ENCODE measurements at regions of chr15 and their contacts with region 1.

Region 1: DNA sequence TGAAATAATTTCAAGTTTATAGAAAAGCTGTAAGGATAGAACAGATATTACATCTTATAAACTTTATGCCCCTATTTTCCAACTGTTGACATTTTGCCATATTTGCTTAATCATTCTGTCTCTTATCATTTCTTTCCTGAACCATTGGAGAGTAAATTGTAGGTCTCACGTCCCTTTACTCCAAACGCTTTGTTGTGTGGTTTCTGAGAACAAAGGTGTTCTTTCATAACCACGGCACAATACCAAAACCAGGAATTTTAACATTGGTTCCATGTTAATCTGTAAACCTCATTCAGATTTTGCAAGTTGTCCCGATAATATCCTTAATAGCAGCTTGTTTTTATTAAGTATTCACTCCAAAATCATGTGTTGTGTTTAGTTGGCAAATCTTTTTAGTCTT is 134.8 kb downstream of the AKAP13 start:
- DNase-seq: no peak
- ATAC-seq: no peak
- H3K4me3 ChIP-seq: no peak overlapping the region
- H3K4me3 Mint-ChIP-seq: no peak overlapping the region
- H3K27ac ChIP-seq: no peak overlapping the region
- H3K27ac Mint-ChIP-seq: no peak overlapping the region
- H3K4me1 ChIP-seq: no peaks in the 10 kb centered on the region
- H3K4me1 Mint-ChIP-seq: peaks cover 62 to 72% (median 70%) of the 10 kb centered on the region in 3 donors
- H3K27me3 ChIP-seq: no peaks in the 10 kb centered on the region
- H3K27me3 Mint-ChIP-seq: no peaks in the 10 kb centered on the region

Region 2: GRCh38 chr15:85495096-85495495 is 20.1 kb before region 1 on chr15:
- CTCF ChIA-PET with region 1: no interaction called
- POLR2A ChIA-PET with region 1: no interaction called
- DNase-seq: no peak
- ATAC-seq: no peak
- H3K4me3 ChIP-seq: no peak overlapping the region
- H3K4me3 Mint-ChIP-seq: no peak overlapping the region
- H3K27ac ChIP-seq: no peak overlapping the region
- H3K27ac Mint-ChIP-seq: no peak overlapping the region
- H3K4me1 ChIP-seq: peaks cover 15 to 17% of the 10 kb centered on the region in 2 experiments
- H3K4me1 Mint-ChIP-seq: peaks cover 80 to 90% (median 87%) of the 10 kb centered on the region in 3 donors
- H3K27me3 ChIP-seq: no peaks in the 10 kb centered on the region
- H3K27me3 Mint-ChIP-seq: no peaks in the 10 kb centered on the region

Region 3: DNA sequence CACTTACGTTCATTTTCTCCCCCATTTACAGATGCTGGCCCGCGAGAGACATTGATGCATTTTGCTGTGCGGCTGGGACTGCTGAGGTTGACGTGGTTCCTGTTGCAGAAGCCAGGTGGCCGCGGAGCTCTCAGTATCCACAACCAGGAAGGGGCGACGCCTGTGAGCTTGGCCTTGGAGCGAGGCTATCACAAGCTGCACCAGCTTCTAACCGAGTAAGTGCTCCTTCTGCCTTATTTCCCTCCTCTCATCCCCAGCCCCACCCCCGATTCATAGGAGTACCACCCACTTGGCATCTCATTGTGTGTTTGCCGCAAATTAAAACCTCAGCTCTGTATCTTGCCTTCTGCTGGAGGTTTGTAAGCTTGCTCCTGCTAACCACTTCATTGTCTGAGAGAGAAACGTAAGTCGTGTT is 28.5 kb after region 1 on chr15:
- CTCF ChIA-PET with region 1: no interaction called
- POLR2A ChIA-PET with region 1: no interaction called
- DNase-seq: peak; percentile 2 to 73 (median 53)
- ATAC-seq: peak; percentile 72 to 93 (median 76)
- H3K4me3 ChIP-seq: peak overlapping the region; percentile 0 to 39
- H3K4me3 Mint-ChIP-seq: peak overlapping the region; percentile 2 to 69 (median 43)
- H3K27ac ChIP-seq: no peak overlapping the region
- H3K27ac Mint-ChIP-seq: peak overlapping the region; percentile 6 to 53
- H3K4me1 ChIP-seq: peaks cover 5 to 20% of the 10 kb centered on the region in 2 experiments
- H3K4me1 Mint-ChIP-seq: peaks cover 71 to 85% (median 81%) of the 10 kb centered on the region in 3 donors
- H3K27me3 ChIP-seq: no peaks in the 10 kb centered on the region
- H3K27me3 Mint-ChIP-seq: no peaks in the 10 kb centered on the region

Region 4: DNA sequence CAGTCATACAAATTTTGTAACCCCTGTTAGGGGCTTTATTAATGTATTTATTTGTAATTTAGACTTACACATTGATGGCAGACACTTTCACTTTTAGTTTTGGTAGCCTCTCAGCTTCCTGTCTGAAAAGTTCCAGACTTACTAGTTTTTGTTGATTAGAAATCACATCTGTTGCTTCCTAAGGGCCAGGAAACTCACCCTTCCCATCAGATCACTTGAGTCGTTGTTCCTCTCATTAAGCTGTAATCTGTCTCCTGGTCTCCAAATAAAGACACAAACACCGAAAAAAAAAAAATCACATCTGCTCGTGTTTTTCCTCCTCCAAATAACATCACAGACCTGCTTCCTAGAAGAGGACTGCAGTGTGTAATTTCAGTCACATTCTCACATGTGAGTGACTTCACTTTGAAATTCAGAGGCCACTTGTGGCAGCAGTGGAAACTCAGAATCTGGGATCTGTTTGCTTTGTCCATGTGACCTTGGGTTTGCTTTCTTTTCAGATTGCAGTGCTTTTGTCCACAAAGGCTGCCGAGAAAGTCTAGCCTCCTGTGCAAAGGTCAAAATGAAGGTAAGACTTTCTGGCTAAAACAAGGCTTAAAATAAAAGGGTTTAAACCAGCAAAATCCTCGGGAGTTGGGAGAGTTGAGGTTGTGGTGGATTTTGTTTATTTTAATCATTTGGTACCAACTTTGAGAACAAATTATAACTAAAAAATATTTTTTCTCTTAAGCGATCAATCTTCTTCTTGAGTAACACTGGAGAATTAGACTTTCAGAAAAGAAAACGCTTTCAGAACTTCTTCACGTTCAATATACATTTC is 192.5 kb after region 1 on chr15:
- CTCF ChIA-PET with region 1: no interaction called
- POLR2A ChIA-PET with region 1: no interaction called
- DNase-seq: peak in 1 of 35 experiments; percentile 73
- ATAC-seq: peak; percentile 38 to 65 (median 42)
- H3K4me3 ChIP-seq: peak overlapping the region; percentile 34 to 46
- H3K4me3 Mint-ChIP-seq: peak overlapping the region; percentile 73 to 84 (median 82)
- H3K27ac ChIP-seq: peak overlapping the region; percentile 91
- H3K27ac Mint-ChIP-seq: peak overlapping the region; percentile 95 to 98
- H3K4me1 ChIP-seq: peaks cover 43 to 65% of the 10 kb centered on the region in 2 experiments
- H3K4me1 Mint-ChIP-seq: peaks cover 74 to 88% (median 87%) of the 10 kb centered on the region in 3 donors
- H3K27me3 ChIP-seq: no peaks in the 10 kb centered on the region
- H3K27me3 Mint-ChIP-seq: no peaks in the 10 kb centered on the region

Region 5: GRCh38 chr15:85750319-85750806 is 235.2 kb after region 1 on chr15:
- CTCF ChIA-PET with region 1: interaction called in 1 of 2 experiments, 10 read pairs
- POLR2A ChIA-PET with region 1: no interaction called
- DNase-seq: no peak
- ATAC-seq: peak in 2 of 4 experiments; percentile 7 to 25
- H3K4me3 ChIP-seq: no peak overlapping the region
- H3K4me3 Mint-ChIP-seq: no peak overlapping the region
- H3K27ac ChIP-seq: no peak overlapping the region
- H3K27ac Mint-ChIP-seq: peak overlapping the region; percentile 52 to 70
- H3K4me1 ChIP-seq: peaks cover 3 to 22% of the 10 kb centered on the region in 2 experiments
- H3K4me1 Mint-ChIP-seq: peaks cover 32 to 40% (median 36%) of the 10 kb centered on the region in 3 donors
- H3K27me3 ChIP-seq: no peaks in the 10 kb centered on the region
- H3K27me3 Mint-ChIP-seq: no peaks in the 10 kb centered on the region

Measured in T-cell (primary cell).